Posterior vena cava (tissue), 2 donors: ENCODE measurements at regions of chr12 and their contacts with region 1.

Region 1: DNA sequence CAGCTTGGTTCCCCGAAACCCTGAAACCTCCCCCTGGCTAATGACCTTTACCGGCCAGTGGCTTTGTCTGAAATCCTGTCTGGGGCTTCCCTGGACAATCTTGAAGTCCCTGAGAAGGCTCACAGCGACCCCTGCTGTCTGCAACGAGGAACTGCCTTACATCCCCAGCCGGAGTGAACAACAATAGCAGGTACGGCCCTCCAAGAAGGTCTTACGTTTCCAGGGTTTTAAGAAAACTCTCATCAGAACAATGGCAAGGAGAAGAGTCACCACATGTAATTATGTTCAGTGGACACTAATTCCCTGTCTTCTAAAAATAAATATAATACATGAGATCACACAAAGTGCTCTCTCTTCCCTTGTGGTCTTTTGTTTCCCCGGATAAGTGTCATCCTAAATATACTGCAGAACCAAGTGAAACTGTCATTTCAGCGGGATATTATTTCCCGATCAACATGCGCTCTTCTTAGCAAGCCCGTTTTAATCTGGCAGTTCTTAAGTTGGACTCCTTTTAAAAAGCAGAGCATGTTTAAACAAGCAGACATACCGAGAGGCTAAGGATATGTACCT is 53.3 kb downstream of the RBM19 start:
- DNase-seq: no peak

Region 2: DNA sequence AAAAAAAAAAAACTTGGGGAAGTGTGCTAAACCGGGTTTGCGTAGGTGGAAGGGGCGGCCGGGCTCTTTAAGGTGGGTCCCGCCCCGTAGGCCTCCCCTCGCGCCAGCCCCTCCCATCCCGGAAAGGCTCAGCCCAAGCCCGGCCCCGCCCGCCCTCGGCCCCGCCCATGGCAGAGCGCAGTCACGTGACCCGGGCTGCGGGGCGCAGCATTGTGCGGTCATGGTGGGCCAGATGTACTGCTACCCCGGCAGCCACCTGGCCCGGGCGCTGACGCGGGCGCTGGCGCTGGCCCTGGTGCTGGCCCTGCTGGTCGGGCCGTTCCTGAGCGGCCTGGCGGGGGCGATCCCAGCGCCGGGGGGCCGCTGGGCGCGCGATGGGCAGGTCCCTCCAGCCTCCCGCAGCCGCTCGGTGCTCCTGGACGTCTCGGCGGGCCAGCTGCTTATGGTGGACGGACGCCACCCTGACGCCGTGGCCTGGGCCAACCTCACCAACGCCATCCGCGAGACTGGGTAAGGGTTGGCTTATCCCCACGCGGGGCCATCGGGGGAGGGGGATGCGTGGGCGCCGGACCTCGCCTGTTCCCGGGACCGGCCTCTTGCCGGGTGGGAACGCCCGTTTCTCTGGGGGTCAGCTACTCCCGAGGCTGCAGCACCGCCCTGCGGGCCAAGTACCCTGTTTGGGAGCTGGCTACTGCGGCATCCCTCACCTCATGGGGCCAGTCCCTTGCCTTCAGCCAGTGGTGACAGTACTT is 554.3 kb before region 1 on chr12 and contains the start of gene PLBD2:
- intact Hi-C with region 1: loop called in 1 of 2 experiments (anchors 5 kb)
- DNase-seq: peak; percentile 98
- total RNA-seq, gene PLBD2: 53.8 to 67.8 TPM

Region 3: DNA sequence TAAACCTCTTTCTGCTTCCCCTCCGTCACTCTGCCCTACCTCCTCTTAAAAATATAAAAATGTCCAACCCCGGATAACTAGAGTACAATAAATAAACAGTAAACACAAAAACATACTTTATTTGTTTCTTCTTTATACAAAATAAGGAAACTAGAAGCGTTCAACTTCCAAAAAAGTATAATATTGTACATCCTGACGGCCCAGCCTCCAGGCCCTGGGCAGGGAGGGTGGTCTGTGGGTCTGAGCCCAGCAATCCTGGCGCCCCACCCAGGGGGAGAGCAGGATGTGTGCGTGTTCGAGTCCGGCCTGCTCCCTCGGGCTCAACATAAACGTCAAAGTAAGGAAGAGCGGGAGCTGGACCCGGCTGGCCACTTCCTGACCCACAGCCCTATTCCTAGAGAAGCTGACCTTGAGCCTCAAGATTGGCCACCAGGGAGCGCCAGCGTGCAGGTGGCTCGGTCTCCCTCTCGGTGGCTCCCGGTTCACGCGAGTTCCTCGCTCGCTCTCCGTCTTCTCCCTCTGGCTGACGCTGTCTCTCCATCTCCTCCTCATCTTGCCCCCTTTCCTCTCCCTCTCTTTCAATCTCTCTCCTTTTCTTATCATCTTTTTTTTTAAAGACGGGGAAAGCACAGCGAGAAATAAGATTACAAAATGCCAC is 450.6 kb before region 1 on chr12:
- intact Hi-C with region 1: loop called in 1 of 2 experiments (anchors 5 kb)
- DNase-seq: peak; percentile 94

Region 4: DNA sequence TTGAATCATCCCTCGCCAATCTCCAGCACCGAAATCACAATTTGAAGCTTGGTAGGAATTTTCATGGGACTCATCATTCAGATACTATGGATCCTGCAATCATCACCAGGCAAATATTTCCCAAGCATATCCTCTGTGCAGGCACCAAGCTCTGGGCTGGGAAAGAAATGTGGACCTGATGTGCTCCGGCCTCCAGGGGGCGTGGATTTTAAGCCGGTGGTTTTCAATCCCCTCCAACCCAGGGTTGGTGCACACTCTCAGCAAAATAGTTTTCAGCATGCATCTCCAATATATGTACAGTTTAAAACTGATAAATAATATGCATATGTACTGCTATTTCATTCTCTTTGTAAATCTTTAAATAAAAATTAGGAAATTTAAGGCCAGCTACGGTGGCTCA is 45.6 kb before region 1 on chr12:
- intact Hi-C with region 1: no loop called
- DNase-seq: no peak

Region 5: DNA sequence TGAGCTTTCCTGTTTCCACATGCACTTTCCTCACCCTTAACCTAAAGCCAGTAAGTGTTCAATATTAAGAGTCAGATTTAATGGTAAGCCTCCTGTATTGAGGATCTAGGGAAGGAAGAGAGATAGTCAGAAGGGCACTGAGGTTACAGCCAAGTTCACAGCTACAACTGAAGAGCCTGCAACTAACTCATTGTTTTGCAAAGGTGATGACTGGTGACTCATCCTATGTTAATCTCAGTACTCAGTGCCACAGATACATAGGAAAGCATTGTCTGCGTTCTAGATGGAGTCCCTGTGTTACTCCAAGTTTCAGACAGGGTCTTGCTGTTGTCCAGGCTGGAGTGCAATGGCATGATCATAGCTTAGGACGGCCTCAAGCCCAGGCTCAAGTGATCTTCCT is 210.3 kb after region 1 on chr12:
- intact Hi-C with region 1: no loop called
- DNase-seq: no peak